Sigmoid colon (tissue), 7 donors: ENCODE measurements at regions of chr9 and their contacts with region 1.

Region 1: GRCh38 chr9:92140074-92140753 is 25.0 kb upstream of the SPTLC1 start:
- DNase-seq: peak; percentile 91
- H3K4me3 ChIP-seq: peak overlapping the region; percentile 15 to 46 (median 44)
- H3K27ac ChIP-seq: no peak overlapping the region
- H3K4me1 ChIP-seq: peaks cover 0 to 17% (median 15%) of the 10 kb centered on the region in 4 donors
- H3K27me3 ChIP-seq: peaks cover 0 to 20% (median 7%) of the 10 kb centered on the region in 3 donors
- CTCF ChIP-seq: peak; percentile 69 to 93 (median 78)
- EP300 ChIP-seq: no peak
- POLR2A ChIP-seq: no peak

Region 2: GRCh38 chr9:92242260-92243136 is 102.3 kb after region 1 on chr9:
- intact Hi-C with region 1: loop called (anchors 5 kb)
- DNase-seq: no peak
- H3K4me3 ChIP-seq: no peak overlapping the region
- H3K27ac ChIP-seq: no peak overlapping the region
- H3K4me1 ChIP-seq: no peaks in the 10 kb centered on the region
- H3K27me3 ChIP-seq: no peaks in the 10 kb centered on the region
- CTCF ChIP-seq: no peak
- EP300 ChIP-seq: no peak
- POLR2A ChIP-seq: no peak

Region 3: GRCh38 chr9:92438900-92439526 is 298.8 kb after region 1 on chr9:
- intact Hi-C with region 1: loop called (anchors 10 kb)
- DNase-seq: no peak
- H3K4me3 ChIP-seq: no peak overlapping the region
- H3K27ac ChIP-seq: no peak overlapping the region
- H3K4me1 ChIP-seq: peaks cover 0 to 6% (median 2%) of the 10 kb centered on the region in 4 donors
- H3K27me3 ChIP-seq: no peaks in the 10 kb centered on the region
- CTCF ChIP-seq: peak; percentile 7 to 48 (median 22)
- EP300 ChIP-seq: no peak
- POLR2A ChIP-seq: no peak

Region 4: DNA sequence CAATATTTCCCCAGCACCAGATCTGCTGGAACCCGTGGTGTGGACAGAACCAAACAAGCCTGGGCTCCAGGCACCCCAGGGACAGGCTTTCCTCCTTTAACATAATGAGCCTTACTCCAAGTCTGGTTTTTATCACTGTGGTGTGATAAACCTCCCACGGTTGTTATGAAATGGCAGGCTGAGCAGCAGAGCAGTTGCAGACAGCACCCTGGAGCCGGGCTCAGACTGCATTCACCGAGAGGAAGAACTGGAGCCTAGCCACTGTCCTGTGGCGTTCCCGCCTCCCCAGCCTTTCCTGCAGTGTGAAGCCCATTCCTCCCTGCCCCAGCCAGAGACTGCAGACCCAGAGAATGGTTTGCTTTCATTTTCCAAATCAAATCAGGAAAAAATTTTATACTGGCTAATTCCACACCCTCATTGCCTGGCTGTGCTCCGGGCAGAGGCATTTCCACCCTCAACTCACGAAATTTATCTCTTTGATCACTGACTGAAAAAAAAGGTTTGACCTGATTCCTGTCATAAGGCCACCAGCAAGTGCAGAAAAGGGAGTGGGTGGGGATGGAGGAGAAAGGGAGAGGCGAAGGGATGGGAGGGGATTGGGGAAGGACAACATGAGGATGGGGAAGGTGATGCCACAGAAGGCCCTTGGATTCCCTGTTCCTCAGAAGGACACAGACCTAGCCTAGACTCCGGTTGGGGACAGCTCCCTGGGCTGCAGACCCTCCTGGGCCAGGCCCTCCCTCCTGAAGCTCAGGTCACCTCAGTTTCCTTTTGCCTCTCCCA is 510.8 kb after region 1 on chr9:
- intact Hi-C with region 1: loop called (anchors 10 kb)
- DNase-seq: peak; percentile 92
- H3K4me3 ChIP-seq: no peak overlapping the region
- H3K27ac ChIP-seq: peak overlapping the region; percentile 44 to 77 (median 75)
- H3K4me1 ChIP-seq: peaks cover 0 to 54% (median 41%) of the 10 kb centered on the region in 4 donors
- H3K27me3 ChIP-seq: no peaks in the 10 kb centered on the region
- CTCF ChIP-seq: no peak
- EP300 ChIP-seq: no peak
- POLR2A ChIP-seq: no peak

Region 5: GRCh38 chr9:92738661-92739081 is 598.5 kb after region 1 on chr9:
- intact Hi-C with region 1: no loop called
- DNase-seq: no peak
- H3K4me3 ChIP-seq: no peak overlapping the region
- H3K27ac ChIP-seq: peak overlapping the region in 2 of 4 donors; percentile 16 to 72
- H3K4me1 ChIP-seq: peaks cover 0 to 78% (median 62%) of the 10 kb centered on the region in 4 donors
- H3K27me3 ChIP-seq: no peaks in the 10 kb centered on the region
- CTCF ChIP-seq: no peak
- EP300 ChIP-seq: no peak
- POLR2A ChIP-seq: no peak